ENCODE measurements at regions of chr3 and their contacts with region 1.

Region 1: GRCh38 chr3:132034486-132035464 is at the start of gene CPNE4:
- DNase-seq: peak; percentile 75 to 77
- ATAC-seq: peak; percentile 84 to 98 (median 96)
- H3K4me3 ChIP-seq: peak within 1 kb of the TSS in 6 of 10 donors; percentile 10 to 43 (median 24)
- H3K27ac ChIP-seq: no peak within 1 kb of the TSS
- H3K4me1 ChIP-seq: peaks cover 0 to 11% (median 0%) of the 10 kb centered on the region in 9 donors
- H3K27me3 ChIP-seq: peaks cover 7 to 92% (median 78%) of the 10 kb centered on the region in 7 donors
- CTCF ChIP-seq: peak in 8 of 9 donors; percentile 37 to 78 (median 73)
- total RNA-seq, gene CPNE4: 11.2 to 116 (median 27.2) TPM

Region 2: GRCh38 chr3:131047582-131047981 is 987.2 kb before region 1 on chr3:
- intact Hi-C with region 1: loop called in 6 of 10 experiments (anchors 5 to 10 kb)
- DNase-seq: no peak
- ATAC-seq: no peak
- H3K4me3 ChIP-seq: no peak overlapping the region
- H3K27ac ChIP-seq: no peak overlapping the region
- H3K4me1 ChIP-seq: no peaks in the 10 kb centered on the region
- H3K27me3 ChIP-seq: no peaks in the 10 kb centered on the region
- CTCF ChIP-seq: no peak

Region 3: GRCh38 chr3:131053043-131053859 is 981.5 kb before region 1 on chr3:
- intact Hi-C with region 1: loop called in 6 of 10 experiments (anchors 5 to 10 kb)
- DNase-seq: no peak
- ATAC-seq: no peak
- H3K4me3 ChIP-seq: no peak overlapping the region
- H3K27ac ChIP-seq: no peak overlapping the region
- H3K4me1 ChIP-seq: no peaks in the 10 kb centered on the region
- H3K27me3 ChIP-seq: no peaks in the 10 kb centered on the region
- CTCF ChIP-seq: peak; percentile 32 to 71 (median 55)

Region 4: DNA sequence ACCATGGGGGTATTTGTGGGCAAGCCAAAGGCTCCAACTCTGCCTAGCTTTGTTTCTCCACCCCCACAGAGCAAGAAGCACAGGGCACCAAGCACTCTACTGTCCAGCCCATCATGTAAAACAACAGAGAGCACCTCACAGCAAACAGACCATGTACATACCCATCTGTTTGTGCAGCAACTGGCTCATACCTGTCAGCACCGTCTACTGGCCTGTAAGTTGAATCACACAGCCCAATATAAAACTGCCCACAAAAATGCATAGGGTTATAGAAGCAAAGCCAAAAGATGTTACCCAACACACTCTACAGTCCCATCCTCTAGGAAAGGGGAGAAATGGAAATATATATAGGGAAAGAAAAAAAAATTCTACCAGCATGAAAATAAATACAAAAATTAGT is 139.7 kb after region 1 on chr3:
- intact Hi-C with region 1: loop called in 1 of 10 experiments (anchors 10 kb)
- DNase-seq: no peak
- ATAC-seq: no peak
- H3K4me3 ChIP-seq: no peak overlapping the region
- H3K27ac ChIP-seq: no peak overlapping the region
- H3K4me1 ChIP-seq: no peaks in the 10 kb centered on the region
- H3K27me3 ChIP-seq: peaks cover 0 to 9% (median 4%) of the 10 kb centered on the region in 7 donors
- CTCF ChIP-seq: no peak

Region 5: DNA sequence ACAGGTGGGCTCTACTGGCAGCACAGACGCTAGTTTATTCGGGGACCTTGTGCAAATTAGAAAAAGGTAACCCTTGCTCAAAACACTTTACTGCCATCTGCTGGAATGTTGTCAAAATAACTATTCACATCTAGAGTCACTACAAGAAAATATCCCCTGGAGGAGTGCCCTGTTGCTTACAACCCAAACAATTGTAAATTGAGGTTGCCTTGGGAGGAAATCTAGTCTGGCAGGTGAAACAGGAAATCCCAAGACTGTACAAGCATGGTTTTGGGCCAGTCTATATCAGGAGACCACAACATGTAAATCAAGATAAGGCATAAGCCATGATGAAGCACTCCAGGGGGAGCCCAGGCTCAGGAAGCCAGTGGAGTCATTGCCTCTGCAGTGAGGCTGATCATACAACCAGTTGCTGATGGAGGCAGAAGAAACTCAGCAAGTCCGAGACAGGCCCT is 145.6 kb after region 1 on chr3:
- intact Hi-C with region 1: loop called in 6 of 10 experiments (anchors 2 to 10 kb)
- DNase-seq: no peak
- ATAC-seq: peak in 3 of 8 donors; percentile 20 to 30 (median 24)
- H3K4me3 ChIP-seq: no peak overlapping the region
- H3K27ac ChIP-seq: no peak overlapping the region
- H3K4me1 ChIP-seq: no peaks in the 10 kb centered on the region
- H3K27me3 ChIP-seq: peaks cover 0 to 4% (median 0%) of the 10 kb centered on the region in 7 donors
- CTCF ChIP-seq: peak in 7 of 9 donors; percentile 41 to 62 (median 49)

Region 6: GRCh38 chr3:132343018-132343612 is 308.3 kb after region 1 on chr3:
- intact Hi-C with region 1: loop called in 2 of 10 experiments (anchors 5 kb)
- DNase-seq: peak in 1 of 2 donors; percentile 52
- ATAC-seq: peak in 5 of 8 donors; percentile 56 to 69 (median 65)
- H3K4me3 ChIP-seq: peak overlapping the region in 1 of 10 donors; percentile 12
- H3K27ac ChIP-seq: no peak overlapping the region
- H3K4me1 ChIP-seq: peaks cover 0 to 25% (median 0%) of the 10 kb centered on the region in 9 donors
- H3K27me3 ChIP-seq: no peaks in the 10 kb centered on the region
- CTCF ChIP-seq: peak; percentile 50 to 82 (median 75)

Region 7: GRCh38 chr3:132399054-132399929 is 364.5 kb after region 1 on chr3:
- intact Hi-C with region 1: loop called in 1 of 10 experiments (anchors 10 kb)
- DNase-seq: peak in 1 of 2 donors; percentile 20
- ATAC-seq: peak in 3 of 8 donors; percentile 61 to 79 (median 63)
- H3K4me3 ChIP-seq: no peak overlapping the region
- H3K27ac ChIP-seq: no peak overlapping the region
- H3K4me1 ChIP-seq: peaks cover 0 to 2% (median 0%) of the 10 kb centered on the region in 9 donors
- H3K27me3 ChIP-seq: no peaks in the 10 kb centered on the region
- CTCF ChIP-seq: peak; percentile 58 to 82 (median 77)